ENCODE measurements at regions of chr20 and their contacts with region 1.

Region 1: GRCh38 chr20:16314320-16314719 is 258.9 kb downstream of the KIF16B start:
- DNase-seq: no peak
- H3K4me3 ChIP-seq: no peak overlapping the region
- H3K27ac ChIP-seq: no peak overlapping the region
- H3K4me1 ChIP-seq: no peaks in the 10 kb centered on the region
- H3K27me3 ChIP-seq: no peaks in the 10 kb centered on the region
- CTCF ChIP-seq: no peak
- EP300 ChIP-seq: no peak
- POLR2A ChIP-seq: no peak

Region 2: DNA sequence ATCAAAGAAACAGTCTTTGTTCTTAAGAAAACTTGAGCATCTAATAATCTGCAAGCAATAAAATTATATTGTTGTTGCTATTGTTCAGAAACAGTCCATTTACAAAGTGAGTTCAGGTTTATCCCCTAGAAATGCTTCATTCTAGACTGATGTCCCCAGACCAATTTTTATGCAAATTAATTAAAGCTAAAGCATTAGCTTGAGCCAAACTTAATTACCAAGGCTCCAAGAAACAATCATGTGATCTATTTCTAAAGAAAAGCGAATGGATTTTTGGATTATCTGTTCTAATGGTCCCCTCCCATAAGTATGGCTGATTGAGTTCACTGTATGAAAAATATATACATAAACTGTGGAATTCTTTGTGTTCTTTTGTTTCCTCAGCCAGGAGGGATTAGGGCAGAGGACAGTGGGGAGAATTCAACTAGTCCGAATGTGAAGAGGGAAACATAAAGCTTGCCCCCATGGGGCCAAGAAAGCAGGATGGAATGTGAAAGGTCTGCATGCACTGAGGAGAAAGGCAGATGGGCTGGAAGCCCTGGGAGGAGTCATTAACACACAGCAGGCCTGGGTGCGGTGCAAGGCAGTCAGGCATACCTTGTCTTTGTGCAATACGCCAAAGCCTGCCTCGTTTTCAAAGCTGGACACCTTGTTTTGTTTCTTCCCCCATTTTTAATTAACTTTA is 338.1 kb before region 1 on chr20:
- in situ Hi-C with region 1: no loop called
- intact Hi-C with region 1: no loop called
- DNase-seq: no peak
- H3K4me3 ChIP-seq: no peak overlapping the region
- H3K27ac ChIP-seq: no peak overlapping the region
- H3K4me1 ChIP-seq: no peaks in the 10 kb centered on the region
- H3K27me3 ChIP-seq: no peaks in the 10 kb centered on the region
- CTCF ChIP-seq: no peak
- EP300 ChIP-seq: no peak
- POLR2A ChIP-seq: no peak

Region 3: GRCh38 chr20:16293590-16293989 is 20.7 kb before region 1 on chr20:
- in situ Hi-C with region 1: no loop called
- intact Hi-C with region 1: loop called (anchors 1 kb)
- DNase-seq: no peak
- H3K4me3 ChIP-seq: no peak overlapping the region
- H3K27ac ChIP-seq: no peak overlapping the region
- H3K4me1 ChIP-seq: no peaks in the 10 kb centered on the region
- H3K27me3 ChIP-seq: no peaks in the 10 kb centered on the region
- CTCF ChIP-seq: no peak
- EP300 ChIP-seq: no peak
- POLR2A ChIP-seq: no peak

Region 4: GRCh38 chr20:16729565-16730456 is 415.5 kb after region 1 on chr20 and contains the start of gene SNRPB2:
- in situ Hi-C with region 1: no loop called
- intact Hi-C with region 1: no loop called
- DNase-seq: peak; percentile 93
- H3K4me3 ChIP-seq: peak within 1 kb of the TSS; percentile 78 to 99 (median 96)
- H3K27ac ChIP-seq: peak within 1 kb of the TSS; percentile 75 to 92 (median 87)
- H3K4me1 ChIP-seq: peaks cover 0 to 19% (median 12%) of the 10 kb centered on the region in 4 donors
- H3K27me3 ChIP-seq: peaks cover 29% of the 10 kb centered on the region
- CTCF ChIP-seq: no peak
- EP300 ChIP-seq: no peak
- POLR2A ChIP-seq: peak; percentile 82
- total RNA-seq, gene SNRPB2: 20.3 to 52.1 (median 30.9) TPM